BJ (cell line): ENCODE measurements at regions of chr17 and their contacts with region 1.

Region 1: GRCh38 chr17:71176331-71176730 is 944.5 kb upstream of the SOX9 start:
- DNase-seq: no peak
- H3K4me3 ChIP-seq: no peak overlapping the region
- H3K27me3 ChIP-seq: no peaks in the 10 kb centered on the region
- CTCF ChIP-seq: no peak

Region 2: GRCh38 chr17:71142333-71142732 is 34.0 kb before region 1 on chr17:
- CTCF ChIA-PET with region 1: no interaction called
- POLR2A ChIA-PET with region 1: interaction called, 17 read pairs
- DNase-seq: no peak
- H3K4me3 ChIP-seq: no peak overlapping the region
- H3K27me3 ChIP-seq: no peaks in the 10 kb centered on the region
- CTCF ChIP-seq: no peak

Region 3: GRCh38 chr17:71494062-71494855 is 317.9 kb after region 1 on chr17:
- CTCF ChIA-PET with region 1: no interaction called
- POLR2A ChIA-PET with region 1: no interaction called
- DNase-seq: peak; percentile 65
- H3K4me3 ChIP-seq: no peak overlapping the region
- H3K27me3 ChIP-seq: no peaks in the 10 kb centered on the region
- CTCF ChIP-seq: no peak